Left lung (tissue), 14 donors: ENCODE measurements at regions of chr10 and their contacts with region 1.

Region 1: GRCh38 chr10:82969405-82969804 is 1094.4 kb downstream of the NRG3 start:
- DNase-seq: no peak
- ATAC-seq: peak; percentile 35
- H3K4me3 ChIP-seq: no peak overlapping the region
- H3K27ac ChIP-seq: no peak overlapping the region
- H3K4me1 ChIP-seq: no peaks in the 10 kb centered on the region
- H3K27me3 ChIP-seq: no peaks in the 10 kb centered on the region
- CTCF ChIP-seq: peak; percentile 13

Region 2: GRCh38 chr10:82796510-82796909 is 172.9 kb before region 1 on chr10:
- intact Hi-C with region 1: loop called in 1 of 2 experiments (anchors 10 kb)
- DNase-seq: peak in 2 of 4 donors; percentile 12 to 26
- ATAC-seq: no peak
- H3K4me3 ChIP-seq: no peak overlapping the region
- H3K27ac ChIP-seq: no peak overlapping the region
- H3K4me1 ChIP-seq: no peaks in the 10 kb centered on the region
- H3K27me3 ChIP-seq: no peaks in the 10 kb centered on the region
- CTCF ChIP-seq: no peak